ENCODE measurements at regions of chr16 and their contacts with region 1.

Region 1: DNA sequence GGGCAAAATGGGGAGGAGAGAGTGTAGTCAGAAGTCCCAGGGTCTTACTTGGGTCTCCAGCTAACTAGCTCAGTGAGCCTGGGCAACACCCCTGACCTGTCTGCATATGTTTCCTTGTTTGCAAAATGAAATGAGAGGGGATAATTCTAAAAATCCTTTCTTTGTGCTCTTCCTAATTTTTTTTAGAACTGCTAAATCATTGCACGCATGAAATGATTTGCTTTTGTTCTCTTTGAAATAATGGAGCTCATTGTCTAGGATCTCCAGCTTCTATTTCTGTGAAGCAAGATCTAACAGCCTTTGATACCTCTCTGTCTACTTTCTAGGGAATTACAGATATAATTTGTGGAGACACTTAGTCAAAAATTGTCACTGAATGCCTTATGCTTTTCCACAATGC is 181.3 kb downstream of the CDH13 start:
- DNase-seq: no peak
- ATAC-seq: no peak
- H3K4me3 ChIP-seq: no peak overlapping the region
- H3K4me3 Mint-ChIP-seq: no peak overlapping the region
- H3K27ac ChIP-seq: no peak overlapping the region
- H3K27ac Mint-ChIP-seq: no peak overlapping the region
- H3K4me1 ChIP-seq: no peaks in the 10 kb centered on the region
- H3K4me1 Mint-ChIP-seq: no peaks in the 10 kb centered on the region
- H3K27me3 ChIP-seq: no peaks in the 10 kb centered on the region
- H3K27me3 Mint-ChIP-seq: peaks cover 6 to 7% of the 10 kb centered on the region in 2 donors

Region 2: GRCh38 chr16:82013139-82013538 is 794.9 kb before region 1 on chr16:
- CTCF ChIA-PET with region 1: no interaction called
- POLR2A ChIA-PET with region 1: interaction called in 1 of 2 experiments, 19 read pairs
- DNase-seq: no peak
- ATAC-seq: no peak
- H3K4me3 ChIP-seq: no peak overlapping the region
- H3K4me3 Mint-ChIP-seq: peak overlapping the region in 1 of 3 donors; percentile 27
- H3K27ac ChIP-seq: no peak overlapping the region
- H3K27ac Mint-ChIP-seq: no peak overlapping the region
- H3K4me1 ChIP-seq: peaks cover 3 to 14% of the 10 kb centered on the region in 2 experiments
- H3K4me1 Mint-ChIP-seq: peaks cover 14 to 24% (median 15%) of the 10 kb centered on the region in 3 donors
- H3K27me3 ChIP-seq: peaks cover 3% of the 10 kb centered on the region in 2 experiments
- H3K27me3 Mint-ChIP-seq: peaks cover 10 to 27% of the 10 kb centered on the region in 2 donors

Measured in T-cell (primary cell).